ENCODE measurements at regions of chr9 and their contacts with region 1.

Region 1: DNA sequence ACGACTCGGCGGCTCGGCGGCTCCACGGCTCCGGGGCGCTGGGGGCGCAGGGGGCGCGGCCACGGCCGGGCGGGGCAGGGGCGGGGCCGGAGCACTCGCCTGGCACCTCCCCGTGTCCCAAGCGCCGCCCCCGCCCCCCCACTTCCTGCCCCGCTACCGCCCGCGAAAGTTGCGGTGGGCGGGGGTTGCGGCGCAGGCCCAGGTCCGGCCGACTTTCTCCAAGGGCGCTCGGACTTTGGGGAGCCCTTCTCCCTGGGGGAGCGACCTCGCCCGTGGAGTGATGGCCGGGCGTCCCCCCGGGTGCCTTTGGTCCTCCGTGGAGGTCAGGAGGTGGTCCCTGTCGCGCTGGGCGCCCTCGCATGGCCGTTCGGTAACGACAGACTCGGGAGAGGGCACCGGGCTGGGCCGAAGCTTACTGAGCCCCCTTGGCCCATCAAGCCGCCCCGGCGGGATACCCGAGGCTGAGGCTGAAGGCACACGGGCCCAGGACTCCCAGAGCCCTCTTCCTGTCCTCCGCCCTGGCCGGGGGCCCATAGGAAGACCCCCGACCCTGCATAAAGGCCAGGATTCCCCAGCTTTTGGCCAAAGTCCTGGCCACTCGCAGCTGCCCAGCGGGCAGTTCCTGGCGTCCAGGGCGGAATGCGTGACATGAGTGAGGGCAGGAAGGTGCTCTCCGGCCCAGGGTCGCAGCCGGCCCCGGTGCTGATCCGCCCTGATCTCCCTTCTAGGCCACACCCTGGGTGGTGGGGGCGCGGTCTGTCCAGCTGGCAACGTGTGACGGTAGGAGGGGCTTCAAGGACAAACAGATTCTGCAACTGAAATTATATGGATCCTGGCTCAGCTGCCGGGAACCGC is 883 bp upstream of the VAV2 start:
- DNase-seq: peak; percentile 83
- H3K4me3 ChIP-seq: peak overlapping the region; percentile 92
- H3K27ac ChIP-seq: peak overlapping the region; percentile 88
- H3K4me1 ChIP-seq: peaks cover 16% of the 10 kb centered on the region
- H3K27me3 ChIP-seq: no peaks in the 10 kb centered on the region
- CTCF ChIP-seq: peak; percentile 61

Region 2: DNA sequence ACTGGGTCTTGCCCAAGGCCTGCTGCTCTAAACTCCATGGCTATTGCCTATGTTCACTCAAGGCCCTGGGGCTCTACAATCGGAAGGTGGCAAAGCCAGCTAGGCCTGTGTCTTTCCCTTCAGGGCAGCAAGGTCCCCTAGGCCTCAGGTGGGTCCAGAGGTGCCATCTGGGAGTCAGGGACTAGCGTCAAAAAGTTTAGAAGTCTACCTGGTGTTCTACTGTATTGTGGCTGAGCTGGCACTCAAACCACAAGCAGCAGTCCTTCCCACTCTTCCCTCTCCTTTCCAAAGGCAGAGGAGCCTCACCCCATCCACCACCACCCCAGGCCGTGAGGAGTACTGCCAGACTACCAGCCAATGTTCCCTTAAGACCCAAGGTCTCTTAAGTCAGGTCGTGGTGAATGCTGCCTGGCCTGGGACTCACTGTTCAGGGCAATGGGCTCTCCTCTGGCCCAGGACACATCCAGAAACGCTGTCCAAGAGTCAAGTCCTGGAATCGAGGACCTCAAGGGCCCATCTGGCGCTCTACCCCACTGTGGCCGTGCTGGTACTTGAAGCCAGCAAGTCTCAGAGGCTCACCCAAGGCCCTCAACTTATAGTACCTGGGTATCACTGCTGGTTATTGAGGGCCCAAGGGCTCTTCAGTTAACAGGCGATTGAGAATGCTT is 241.9 kb before region 1 on chr9:
- CTCF ChIA-PET with region 1: no interaction called
- POLR2A ChIA-PET with region 1: no interaction called
- intact Hi-C with region 1: no loop called
- DNase-seq: no peak
- H3K4me3 ChIP-seq: no peak overlapping the region
- H3K27ac ChIP-seq: no peak overlapping the region
- H3K4me1 ChIP-seq: no peaks in the 10 kb centered on the region
- H3K27me3 ChIP-seq: peaks cover 9% of the 10 kb centered on the region
- CTCF ChIP-seq: no peak

Region 3: GRCh38 chr9:133782157-133783130 is 210.6 kb before region 1 on chr9:
- CTCF ChIA-PET with region 1: interaction called, 54 read pairs
- POLR2A ChIA-PET with region 1: no interaction called
- intact Hi-C with region 1: loop called (anchors 1 kb)
- DNase-seq: peak; percentile 78
- H3K4me3 ChIP-seq: no peak overlapping the region
- H3K27ac ChIP-seq: no peak overlapping the region
- H3K4me1 ChIP-seq: peaks cover 2% of the 10 kb centered on the region
- H3K27me3 ChIP-seq: no peaks in the 10 kb centered on the region
- CTCF ChIP-seq: peak; percentile 94

Region 4: DNA sequence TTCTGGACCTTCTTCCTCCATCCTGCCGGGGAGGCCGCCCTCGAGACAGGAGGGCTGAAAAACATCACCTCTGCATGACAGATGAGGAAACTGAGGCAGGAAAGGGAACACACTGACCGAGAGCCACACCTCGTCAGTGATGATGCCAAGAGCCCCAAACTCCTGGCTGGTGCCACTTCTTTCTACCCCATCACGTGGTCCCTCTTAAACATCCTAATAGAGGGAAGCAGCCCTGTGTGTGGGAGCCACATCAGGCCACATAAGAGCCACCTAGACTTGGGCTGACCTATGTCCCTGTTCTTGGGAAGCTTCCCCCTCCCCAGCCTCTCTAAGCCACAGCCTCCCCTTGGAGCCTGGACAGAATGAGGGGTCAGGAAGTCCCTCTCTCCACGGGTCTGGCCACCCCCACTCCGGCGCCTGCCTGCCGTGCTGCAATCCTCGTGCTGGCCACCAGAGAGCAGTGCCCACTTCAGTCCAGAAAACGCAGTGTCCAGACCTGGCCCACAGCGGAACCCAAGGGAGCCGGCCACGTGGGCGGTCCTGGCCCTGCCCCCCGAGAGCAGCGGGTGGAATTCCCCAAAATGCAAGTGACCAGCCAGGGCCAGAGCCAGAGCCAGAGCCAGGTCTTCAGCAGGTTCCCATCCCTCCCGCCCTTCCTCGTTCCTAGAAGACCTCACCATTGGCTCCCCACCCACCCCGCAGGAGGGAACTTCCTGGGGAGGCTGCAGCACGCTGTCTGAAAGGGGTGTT is 200.1 kb before region 1 on chr9:
- CTCF ChIA-PET with region 1: interaction called, 19 read pairs
- POLR2A ChIA-PET with region 1: no interaction called
- intact Hi-C with region 1: loop called (anchors 1 kb)
- DNase-seq: peak; percentile 57
- H3K4me3 ChIP-seq: no peak overlapping the region
- H3K27ac ChIP-seq: no peak overlapping the region
- H3K4me1 ChIP-seq: peaks cover 23% of the 10 kb centered on the region
- H3K27me3 ChIP-seq: no peaks in the 10 kb centered on the region
- CTCF ChIP-seq: peak; percentile 90

Region 5: GRCh38 chr9:133825555-133826208 is 167.3 kb before region 1 on chr9:
- CTCF ChIA-PET with region 1: no interaction called
- POLR2A ChIA-PET with region 1: no interaction called
- intact Hi-C with region 1: no loop called
- DNase-seq: peak; percentile 45
- H3K4me3 ChIP-seq: no peak overlapping the region
- H3K27ac ChIP-seq: peak overlapping the region; percentile 49
- H3K4me1 ChIP-seq: peaks cover 21% of the 10 kb centered on the region
- H3K27me3 ChIP-seq: no peaks in the 10 kb centered on the region
- CTCF ChIP-seq: no peak

Region 6: GRCh38 chr9:134163353-134164196 is 170.6 kb after region 1 on chr9:
- CTCF ChIA-PET with region 1: no interaction called
- POLR2A ChIA-PET with region 1: no interaction called
- intact Hi-C with region 1: no loop called
- DNase-seq: peak; percentile 66
- H3K4me3 ChIP-seq: no peak overlapping the region
- H3K27ac ChIP-seq: no peak overlapping the region
- H3K4me1 ChIP-seq: no peaks in the 10 kb centered on the region
- H3K27me3 ChIP-seq: no peaks in the 10 kb centered on the region
- CTCF ChIP-seq: no peak

Measured in A673 (cell line).